IMR-90 (cell line): ENCODE measurements at regions of chr5 and their contacts with region 1.

Region 1: GRCh38 chr5:93582677-93583438 is at the start of gene NR2F1:
- DNase-seq: peak; percentile 99
- ATAC-seq: peak; percentile 45
- H3K4me3 ChIP-seq: peak within 1 kb of the TSS; percentile 99
- H3K27ac ChIP-seq: peak within 1 kb of the TSS; percentile 97
- H3K4me1 ChIP-seq: no peaks in the 10 kb centered on the region
- H3K27me3 ChIP-seq: no peaks in the 10 kb centered on the region
- CTCF ChIP-seq: 0 out of 2 replicates have a peak, but pooled peaks have one; percentile 23
- POLR2A ChIP-seq: peak; percentile 69
- RAD21 ChIP-seq: no peak
- total RNA-seq, gene NR2F1: 18.1 and 19.0 TPM in 2 replicates

Region 2: DNA sequence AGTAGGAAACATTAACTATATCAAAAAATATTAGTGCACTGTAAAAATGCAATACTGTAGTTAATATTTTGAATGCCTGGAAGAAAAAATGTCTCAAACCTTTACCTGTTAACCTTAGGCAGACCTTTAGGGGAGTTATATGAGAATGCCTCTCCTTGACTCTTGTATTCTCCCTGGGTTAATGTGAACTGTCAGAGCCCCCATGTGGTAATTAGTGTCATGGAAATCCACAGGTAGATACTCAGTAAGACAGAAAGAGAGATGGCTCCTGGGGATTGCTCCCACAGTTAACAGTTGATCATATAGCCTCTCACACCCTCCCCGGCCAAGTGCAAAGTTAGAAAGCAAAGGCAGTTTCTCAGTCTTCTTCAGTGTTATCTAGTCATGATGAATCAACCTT is 744.6 kb before region 1 on chr5:
- CTCF ChIA-PET with region 1: no interaction called
- POLR2A ChIA-PET with region 1: no interaction called
- dilution Hi-C with region 1: no loop called
- in situ Hi-C with region 1: no loop called
- intact Hi-C with region 1: loop called (anchors 5 kb)
- DNase-seq: no peak
- ATAC-seq: no peak
- H3K4me3 ChIP-seq: no peak overlapping the region
- H3K27ac ChIP-seq: peak overlapping the region; percentile 75; the same call in 1 of the 2 replicates
- H3K4me1 ChIP-seq: peaks cover 9% of the 10 kb centered on the region
- H3K27me3 ChIP-seq: no peaks in the 10 kb centered on the region
- CTCF ChIP-seq: 0 out of 2 replicates have a peak, but pooled peaks have one; percentile 4
- POLR2A ChIP-seq: no peak
- RAD21 ChIP-seq: no peak

Region 3: GRCh38 chr5:93078082-93079038 is 504.5 kb before region 1 on chr5:
- CTCF ChIA-PET with region 1: no interaction called
- POLR2A ChIA-PET with region 1: no interaction called
- dilution Hi-C with region 1: no loop called
- in situ Hi-C with region 1: loop called (anchors 10 kb)
- intact Hi-C with region 1: loop called (anchors 2 kb)
- DNase-seq: peak; percentile 93
- ATAC-seq: peak; percentile 82
- H3K4me3 ChIP-seq: peak overlapping the region; percentile 29
- H3K27ac ChIP-seq: peak overlapping the region; percentile 97
- H3K4me1 ChIP-seq: peaks cover 4% of the 10 kb centered on the region
- H3K27me3 ChIP-seq: no peaks in the 10 kb centered on the region
- CTCF ChIP-seq: no peak
- POLR2A ChIP-seq: no peak
- RAD21 ChIP-seq: no peak; the same call in 1 of the 2 replicates

Region 4: DNA sequence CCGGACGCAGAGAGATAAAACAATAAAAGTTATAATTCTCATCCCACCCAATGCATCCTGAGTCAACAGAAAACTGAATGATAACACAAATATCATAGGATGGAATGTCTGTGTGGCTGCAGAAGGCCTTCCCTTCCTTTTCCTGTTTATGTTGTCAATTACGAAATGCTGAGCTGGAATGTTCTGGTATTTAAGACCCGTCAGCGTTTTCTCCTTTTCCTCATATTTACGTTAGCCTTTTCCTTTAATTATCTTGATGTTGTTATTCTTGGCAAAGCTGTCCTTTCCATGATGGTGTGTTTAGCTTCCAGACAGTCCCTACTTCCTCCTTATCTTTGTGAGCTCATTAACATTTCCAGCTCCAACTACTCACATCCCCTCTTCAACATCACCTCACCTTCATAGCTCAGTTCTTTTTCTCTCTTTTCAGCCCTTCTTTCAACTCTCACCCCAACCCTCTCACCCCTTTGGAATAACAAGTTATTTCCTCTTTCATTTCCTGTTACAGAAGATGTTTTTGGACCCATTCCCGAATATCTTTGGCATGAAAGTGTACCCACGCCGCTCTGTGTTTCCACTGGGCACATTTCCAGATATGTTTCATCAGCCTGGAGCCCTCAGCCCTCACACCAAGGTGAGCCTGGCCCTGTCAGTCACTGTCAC is 223.4 kb before region 1 on chr5:
- CTCF ChIA-PET with region 1: interaction called, 3 read pairs
- POLR2A ChIA-PET with region 1: no interaction called
- dilution Hi-C with region 1: no loop called
- in situ Hi-C with region 1: no loop called
- intact Hi-C with region 1: loop called (anchors 2 kb)
- DNase-seq: peak; percentile 91
- ATAC-seq: peak; percentile 93
- H3K4me3 ChIP-seq: no peak overlapping the region
- H3K27ac ChIP-seq: peak overlapping the region; percentile 74
- H3K4me1 ChIP-seq: peaks cover 3% of the 10 kb centered on the region
- H3K27me3 ChIP-seq: no peaks in the 10 kb centered on the region
- CTCF ChIP-seq: no peak
- POLR2A ChIP-seq: no peak
- RAD21 ChIP-seq: no peak

Region 5: DNA sequence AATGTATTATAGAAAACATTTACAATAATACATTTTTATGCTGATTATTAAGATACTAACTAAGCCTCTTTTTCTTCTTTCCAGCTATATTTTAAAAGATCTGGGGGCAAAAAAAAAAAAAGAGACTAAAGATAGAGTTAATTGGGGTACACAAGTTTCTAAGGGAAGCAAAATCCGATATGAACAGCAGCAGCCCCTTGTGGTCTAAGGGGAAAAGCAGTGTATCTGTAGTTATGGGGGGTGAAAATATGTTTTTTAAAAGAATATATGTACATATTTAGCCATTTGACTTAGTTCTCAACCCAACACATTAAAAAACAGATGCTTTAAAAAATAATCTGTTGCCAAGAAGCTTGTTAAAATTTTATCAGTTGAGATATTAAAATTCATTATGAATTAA is 292.8 kb after region 1 on chr5:
- CTCF ChIA-PET with region 1: no interaction called
- POLR2A ChIA-PET with region 1: interaction called, 14 read pairs
- dilution Hi-C with region 1: no loop called
- in situ Hi-C with region 1: no loop called
- intact Hi-C with region 1: no loop called
- DNase-seq: no peak
- ATAC-seq: no peak
- H3K4me3 ChIP-seq: no peak overlapping the region
- H3K27ac ChIP-seq: no peak overlapping the region
- H3K4me1 ChIP-seq: peaks cover 2% of the 10 kb centered on the region; the same call in 1 of the 2 replicates
- H3K27me3 ChIP-seq: no peaks in the 10 kb centered on the region
- CTCF ChIP-seq: 0 out of 2 replicates have a peak, but pooled peaks have one; percentile 17
- POLR2A ChIP-seq: no peak
- RAD21 ChIP-seq: no peak

Region 6: DNA sequence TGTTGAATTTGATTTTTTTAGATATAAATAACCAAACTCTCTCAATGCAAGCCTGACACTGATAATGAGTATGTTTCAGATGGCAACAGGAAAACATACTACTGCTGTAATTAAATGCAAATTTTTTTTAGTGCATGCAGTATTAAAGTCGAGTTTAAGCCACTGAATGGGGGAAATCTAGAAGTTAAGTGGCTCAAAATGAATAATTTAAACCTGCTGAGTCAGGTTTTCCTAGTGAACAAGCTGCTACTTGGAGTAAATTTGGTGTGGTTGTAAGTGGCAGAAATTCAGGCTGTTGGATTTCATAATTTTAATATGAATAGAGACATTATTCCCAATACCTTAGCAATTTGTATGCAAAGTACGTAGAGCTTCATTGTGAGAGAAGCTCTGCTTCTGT is 1157.4 kb after region 1 on chr5:
- CTCF ChIA-PET with region 1: no interaction called
- POLR2A ChIA-PET with region 1: no interaction called
- dilution Hi-C with region 1: no loop called
- in situ Hi-C with region 1: no loop called
- intact Hi-C with region 1: loop called (anchors 5 kb)
- DNase-seq: no peak
- ATAC-seq: no peak
- H3K4me3 ChIP-seq: no peak overlapping the region
- H3K27ac ChIP-seq: no peak overlapping the region
- H3K4me1 ChIP-seq: no peaks in the 10 kb centered on the region
- H3K27me3 ChIP-seq: no peaks in the 10 kb centered on the region
- CTCF ChIP-seq: no peak
- POLR2A ChIP-seq: no peak
- RAD21 ChIP-seq: no peak